ENCODE measurements at regions of chr10 and their contacts with region 1.

Region 1: DNA sequence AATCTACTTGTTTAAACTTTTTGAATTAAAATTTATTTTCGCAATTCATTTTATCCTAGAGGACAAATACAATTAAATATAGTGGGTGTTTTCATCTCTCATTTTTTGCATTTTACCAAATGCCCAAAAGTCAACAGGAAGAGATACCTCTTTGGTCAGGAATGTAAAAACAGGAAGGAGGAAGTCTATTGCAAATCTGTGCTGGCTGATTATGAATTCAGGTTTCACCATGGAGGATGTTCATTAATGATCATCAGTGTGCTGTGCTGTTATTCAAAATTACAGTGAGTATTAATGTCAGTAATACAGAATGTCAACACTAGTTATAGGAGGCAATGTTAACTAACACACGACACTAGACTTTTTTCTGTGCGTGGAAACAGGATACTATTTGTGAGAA is 24.7 kb downstream of the EXOC6 start:
- DNase-seq: no peak
- ATAC-seq: no peak
- H3K4me3 ChIP-seq: no peak overlapping the region
- H3K27ac ChIP-seq: no peak overlapping the region
- H3K4me1 ChIP-seq: peaks cover 0 to 15% of the 10 kb centered on the region in 2 donors
- H3K27me3 ChIP-seq: no peaks in the 10 kb centered on the region
- CTCF ChIP-seq: no peak
- POLR2A ChIP-seq: no peak

Region 2: DNA sequence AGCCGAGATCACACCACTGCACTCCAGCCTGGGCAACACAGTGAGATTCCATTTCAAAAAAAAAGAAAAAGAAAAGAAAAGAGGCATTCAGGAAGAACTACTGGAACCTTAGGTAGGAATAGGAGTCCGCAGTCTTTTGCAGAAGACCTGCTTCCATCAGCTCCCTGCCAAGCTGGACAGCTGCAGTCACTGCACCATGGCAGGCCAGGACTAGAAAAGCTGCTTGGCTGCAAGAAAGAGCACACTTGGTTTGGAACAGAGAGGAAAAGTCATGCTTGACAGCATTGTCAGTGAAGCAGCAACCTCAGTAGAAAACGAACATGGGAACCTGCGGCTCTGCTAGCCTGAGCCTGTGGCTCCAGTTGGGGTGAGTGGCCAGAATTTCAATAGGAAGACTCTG is 477.8 kb before region 1 on chr10:
- in situ Hi-C with region 1: no loop called
- intact Hi-C with region 1: no loop called
- DNase-seq: no peak
- ATAC-seq: no peak
- H3K4me3 ChIP-seq: no peak overlapping the region
- H3K27ac ChIP-seq: no peak overlapping the region
- H3K4me1 ChIP-seq: no peaks in the 10 kb centered on the region
- H3K27me3 ChIP-seq: no peaks in the 10 kb centered on the region
- CTCF ChIP-seq: no peak
- POLR2A ChIP-seq: no peak

Region 3: GRCh38 chr10:92517034-92517655 is 355.9 kb before region 1 on chr10:
- in situ Hi-C with region 1: no loop called
- intact Hi-C with region 1: loop called (anchors 5 kb)
- DNase-seq: peak; percentile 25 to 50
- ATAC-seq: peak; percentile 80 to 89
- H3K4me3 ChIP-seq: no peak overlapping the region
- H3K27ac ChIP-seq: no peak overlapping the region
- H3K4me1 ChIP-seq: no peaks in the 10 kb centered on the region
- H3K27me3 ChIP-seq: no peaks in the 10 kb centered on the region
- CTCF ChIP-seq: peak; percentile 68 to 82 (median 70)
- POLR2A ChIP-seq: no peak

Region 4: GRCh38 chr10:92822060-92822634 is 50.9 kb before region 1 on chr10:
- in situ Hi-C with region 1: loop called in 1 of 4 experiments (anchors 10 kb)
- intact Hi-C with region 1: no loop called
- DNase-seq: no peak
- ATAC-seq: peak in 1 of 2 donors; percentile 61
- H3K4me3 ChIP-seq: no peak overlapping the region
- H3K27ac ChIP-seq: peak overlapping the region in 3 of 4 donors; percentile 25 to 58 (median 33)
- H3K4me1 ChIP-seq: no peaks in the 10 kb centered on the region
- H3K27me3 ChIP-seq: no peaks in the 10 kb centered on the region
- CTCF ChIP-seq: no peak
- POLR2A ChIP-seq: no peak

Region 5: DNA sequence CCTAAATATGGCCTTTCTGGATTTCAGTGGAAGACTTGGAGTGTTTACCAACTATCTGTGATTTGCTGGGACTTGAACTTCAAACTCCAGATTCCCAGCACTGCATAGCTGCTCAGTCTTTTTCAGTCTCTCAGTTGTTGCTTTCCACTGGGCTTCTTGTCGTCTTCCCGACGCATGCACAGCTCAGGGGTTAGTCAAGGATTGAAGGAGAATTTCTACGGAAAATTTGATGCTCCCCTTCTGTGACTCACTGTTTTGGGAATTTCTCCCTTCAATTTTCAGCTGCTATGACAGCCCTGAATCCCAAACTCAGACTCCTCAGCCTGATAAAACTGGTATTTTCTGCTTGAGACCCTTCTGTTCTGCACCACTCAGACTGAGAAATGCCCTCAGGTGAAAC is 292.3 kb after region 1 on chr10:
- in situ Hi-C with region 1: no loop called
- intact Hi-C with region 1: no loop called
- DNase-seq: no peak
- ATAC-seq: no peak
- H3K4me3 ChIP-seq: no peak overlapping the region
- H3K27ac ChIP-seq: no peak overlapping the region
- H3K4me1 ChIP-seq: no peaks in the 10 kb centered on the region
- H3K27me3 ChIP-seq: no peaks in the 10 kb centered on the region
- CTCF ChIP-seq: no peak
- POLR2A ChIP-seq: no peak